CD8-positive, alpha-beta T cell (primary cell): ENCODE measurements at regions of chr2 and their contacts with region 1.

Region 1: GRCh38 chr2:208265801-208266552 is at the start of gene PIKFYVE:
- DNase-seq: peak; percentile 71 to 95 (median 88)
- ATAC-seq: peak; percentile 80
- H3K4me3 ChIP-seq: peak within 1 kb of the TSS; percentile 70 to 86
- H3K4me3 Mint-ChIP-seq: peak within 1 kb of the TSS; percentile 86
- H3K27ac ChIP-seq: peak within 1 kb of the TSS; percentile 67 to 88
- H3K27ac Mint-ChIP-seq: peak within 1 kb of the TSS; percentile 98
- H3K4me1 ChIP-seq: peaks cover 21% of the 10 kb centered on the region
- H3K4me1 Mint-ChIP-seq: peaks cover 45% of the 10 kb centered on the region
- H3K27me3 ChIP-seq: no peaks in the 10 kb centered on the region
- H3K27me3 Mint-ChIP-seq: no peaks in the 10 kb centered on the region
- CTCF ChIP-seq: no peak
- total RNA-seq, gene PIKFYVE: 27.7 to 29.1 TPM

Region 2: DNA sequence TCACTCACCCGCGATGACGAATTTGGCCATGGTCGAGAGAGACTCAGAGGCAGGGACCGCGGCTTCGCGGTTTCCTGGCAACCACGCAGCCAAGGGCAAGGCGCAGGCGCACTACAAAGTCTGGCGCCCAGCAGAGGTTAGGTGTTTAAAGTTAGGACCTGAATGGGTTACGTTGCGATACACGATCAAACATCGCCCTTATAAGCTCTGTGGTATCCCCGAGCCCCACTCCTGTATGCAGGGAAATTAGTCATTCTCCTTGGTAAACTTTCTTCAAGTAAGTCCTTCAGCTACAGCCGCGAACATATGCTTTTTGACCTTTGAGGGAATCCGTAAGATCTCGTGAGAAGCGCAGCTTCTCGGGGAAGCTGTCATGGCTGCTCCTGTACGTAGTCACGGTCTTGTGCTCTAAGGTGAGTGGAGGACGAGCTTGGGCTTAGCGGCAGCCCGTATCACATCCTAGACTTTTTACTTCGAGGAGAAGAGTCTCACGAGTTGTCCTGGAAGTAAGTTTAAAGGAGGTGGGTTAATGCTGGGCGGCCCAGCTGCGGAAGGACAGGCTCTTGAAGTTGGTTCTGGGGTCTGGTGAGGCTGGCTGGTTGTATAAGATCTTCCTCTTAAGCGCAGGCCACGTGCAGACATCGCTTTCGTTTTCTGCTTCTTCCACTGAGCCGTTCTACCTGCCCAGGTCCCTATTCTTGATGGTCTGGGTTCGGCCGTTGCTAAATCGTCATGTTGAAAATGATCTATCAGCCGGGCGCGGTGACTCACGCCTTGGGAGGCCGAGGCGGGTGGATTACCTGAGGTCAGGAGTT is 1500.5 kb before region 1 on chr2 and contains the starts of genes FASTKD2 and MDH1B:
- CTCF ChIA-PET with region 1: no interaction called
- POLR2A ChIA-PET with region 1: no interaction called
- intact Hi-C with region 1: loop called (anchors 1 to 5 kb)
- DNase-seq: peak; percentile 64 to 94 (median 81)
- ATAC-seq: peak; percentile 87
- H3K4me3 ChIP-seq: peak within 1 kb of the TSS; percentile 62 to 94
- H3K4me3 Mint-ChIP-seq: peak within 1 kb of the TSS; percentile 94
- H3K27ac ChIP-seq: peak within 1 kb of the TSS; percentile 93 to 97
- H3K27ac Mint-ChIP-seq: peak within 1 kb of the TSS; percentile 98
- H3K4me1 ChIP-seq: peaks cover 40% of the 10 kb centered on the region
- H3K4me1 Mint-ChIP-seq: peaks cover 41% of the 10 kb centered on the region
- H3K27me3 ChIP-seq: no peaks in the 10 kb centered on the region
- H3K27me3 Mint-ChIP-seq: no peaks in the 10 kb centered on the region
- CTCF ChIP-seq: no peak
- total RNA-seq, gene FASTKD2: 31.3 to 33.8 TPM
- total RNA-seq, gene MDH1B: 0.19 to 0.33 TPM

Region 3: GRCh38 chr2:208025037-208025813 is 240.8 kb before region 1 on chr2 and contains the start of gene PLEKHM3:
- CTCF ChIA-PET with region 1: no interaction called
- POLR2A ChIA-PET with region 1: interaction called, 3 read pairs
- intact Hi-C with region 1: loop called in 1 of 2 experiments (anchors 1 kb)
- DNase-seq: peak; percentile 53 to 90 (median 71)
- ATAC-seq: peak; percentile 76
- H3K4me3 ChIP-seq: peak within 1 kb of the TSS; percentile 79 to 80
- H3K4me3 Mint-ChIP-seq: peak within 1 kb of the TSS; percentile 98
- H3K27ac ChIP-seq: peak within 1 kb of the TSS; percentile 64 to 67
- H3K27ac Mint-ChIP-seq: peak within 1 kb of the TSS; percentile 95
- H3K4me1 ChIP-seq: peaks cover 6% of the 10 kb centered on the region
- H3K4me1 Mint-ChIP-seq: peaks cover 30% of the 10 kb centered on the region
- H3K27me3 ChIP-seq: no peaks in the 10 kb centered on the region
- H3K27me3 Mint-ChIP-seq: no peaks in the 10 kb centered on the region
- CTCF ChIP-seq: no peak
- total RNA-seq, gene PLEKHM3: 10.9 to 11.3 TPM

Region 4: GRCh38 chr2:208175069-208175839 is 90.7 kb before region 1 on chr2:
- CTCF ChIA-PET with region 1: interaction called, 7 read pairs
- POLR2A ChIA-PET with region 1: no interaction called
- intact Hi-C with region 1: loop called (anchors 2 to 5 kb)
- DNase-seq: peak; percentile 27 to 74 (median 57)
- ATAC-seq: peak; percentile 96
- H3K4me3 ChIP-seq: no peak overlapping the region
- H3K4me3 Mint-ChIP-seq: no peak overlapping the region
- H3K27ac ChIP-seq: no peak overlapping the region
- H3K27ac Mint-ChIP-seq: no peak overlapping the region
- H3K4me1 ChIP-seq: no peaks in the 10 kb centered on the region
- H3K4me1 Mint-ChIP-seq: peaks cover 4% of the 10 kb centered on the region
- H3K27me3 ChIP-seq: no peaks in the 10 kb centered on the region
- H3K27me3 Mint-ChIP-seq: peaks cover 12% of the 10 kb centered on the region
- CTCF ChIP-seq: peak; percentile 78

Region 5: DNA sequence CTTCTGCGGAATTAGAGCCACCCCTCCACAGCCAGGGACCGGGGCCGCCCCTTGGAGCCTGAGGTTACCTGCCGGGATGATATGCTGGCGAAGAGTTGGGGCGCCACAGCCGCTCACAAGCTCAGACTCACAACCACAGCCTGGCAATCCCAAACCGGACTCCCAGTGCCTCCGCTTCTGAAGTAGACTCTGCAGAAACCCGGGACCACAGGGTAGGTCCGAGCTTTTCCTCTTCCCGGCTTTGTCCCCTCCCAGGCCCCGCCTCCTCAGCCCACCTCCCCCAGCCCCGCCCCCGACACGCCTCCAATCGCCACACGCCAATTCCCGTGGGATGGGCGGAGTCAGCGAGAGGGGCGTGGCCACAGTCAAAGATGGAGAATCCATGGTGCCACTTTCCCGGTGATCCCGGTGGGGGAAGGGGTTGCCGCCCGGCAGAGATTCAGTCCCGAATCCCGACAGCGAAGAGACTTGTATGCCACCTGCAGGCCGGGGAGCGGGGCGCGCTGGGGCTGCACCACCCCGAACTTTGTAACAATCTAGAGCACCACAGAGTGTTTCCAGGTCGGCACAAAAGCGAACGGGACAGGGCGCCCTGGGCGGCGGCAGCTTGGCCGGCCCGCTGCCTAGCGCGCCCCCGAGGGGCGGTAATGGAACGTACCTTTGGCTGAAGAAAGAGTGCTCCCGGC is 11.0 kb before region 1 on chr2 and contains the start of gene IDH1:
- CTCF ChIA-PET with region 1: interaction called, 90 read pairs
- POLR2A ChIA-PET with region 1: interaction called, 50 read pairs
- intact Hi-C with region 1: loop called (anchors 1 kb)
- DNase-seq: peak; percentile 83 to 97 (median 93)
- ATAC-seq: peak; percentile 85
- H3K4me3 ChIP-seq: peak within 1 kb of the TSS; percentile 99
- H3K4me3 Mint-ChIP-seq: peak within 1 kb of the TSS; percentile 94
- H3K27ac ChIP-seq: peak within 1 kb of the TSS; percentile 31 to 51
- H3K27ac Mint-ChIP-seq: peak within 1 kb of the TSS; percentile 83
- H3K4me1 ChIP-seq: peaks cover 13% of the 10 kb centered on the region
- H3K4me1 Mint-ChIP-seq: peaks cover 31% of the 10 kb centered on the region
- H3K27me3 ChIP-seq: no peaks in the 10 kb centered on the region
- H3K27me3 Mint-ChIP-seq: no peaks in the 10 kb centered on the region
- CTCF ChIP-seq: no peak
- total RNA-seq, gene IDH1: 3.0 to 4.0 TPM

Region 6: GRCh38 chr2:208304157-208304556 is 38.2 kb after region 1 on chr2:
- CTCF ChIA-PET with region 1: no interaction called
- POLR2A ChIA-PET with region 1: no interaction called
- intact Hi-C with region 1: no loop called
- DNase-seq: no peak
- ATAC-seq: no peak
- H3K4me3 ChIP-seq: no peak overlapping the region
- H3K4me3 Mint-ChIP-seq: no peak overlapping the region
- H3K27ac ChIP-seq: no peak overlapping the region
- H3K27ac Mint-ChIP-seq: no peak overlapping the region
- H3K4me1 ChIP-seq: no peaks in the 10 kb centered on the region
- H3K4me1 Mint-ChIP-seq: no peaks in the 10 kb centered on the region
- H3K27me3 ChIP-seq: no peaks in the 10 kb centered on the region
- H3K27me3 Mint-ChIP-seq: no peaks in the 10 kb centered on the region
- CTCF ChIP-seq: no peak

Region 7: GRCh38 chr2:209942936-209943605 is 1677.1 kb after region 1 on chr2:
- CTCF ChIA-PET with region 1: no interaction called
- POLR2A ChIA-PET with region 1: no interaction called
- intact Hi-C with region 1: no loop called
- DNase-seq: no peak
- ATAC-seq: no peak
- H3K4me3 ChIP-seq: no peak overlapping the region
- H3K4me3 Mint-ChIP-seq: no peak overlapping the region
- H3K27ac ChIP-seq: no peak overlapping the region
- H3K27ac Mint-ChIP-seq: no peak overlapping the region
- H3K4me1 ChIP-seq: no peaks in the 10 kb centered on the region
- H3K4me1 Mint-ChIP-seq: no peaks in the 10 kb centered on the region
- H3K27me3 ChIP-seq: peaks cover 0 to 2% of the 10 kb centered on the region in 2 experiments
- H3K27me3 Mint-ChIP-seq: peaks cover 6% of the 10 kb centered on the region
- CTCF ChIP-seq: no peak

Region 8: DNA sequence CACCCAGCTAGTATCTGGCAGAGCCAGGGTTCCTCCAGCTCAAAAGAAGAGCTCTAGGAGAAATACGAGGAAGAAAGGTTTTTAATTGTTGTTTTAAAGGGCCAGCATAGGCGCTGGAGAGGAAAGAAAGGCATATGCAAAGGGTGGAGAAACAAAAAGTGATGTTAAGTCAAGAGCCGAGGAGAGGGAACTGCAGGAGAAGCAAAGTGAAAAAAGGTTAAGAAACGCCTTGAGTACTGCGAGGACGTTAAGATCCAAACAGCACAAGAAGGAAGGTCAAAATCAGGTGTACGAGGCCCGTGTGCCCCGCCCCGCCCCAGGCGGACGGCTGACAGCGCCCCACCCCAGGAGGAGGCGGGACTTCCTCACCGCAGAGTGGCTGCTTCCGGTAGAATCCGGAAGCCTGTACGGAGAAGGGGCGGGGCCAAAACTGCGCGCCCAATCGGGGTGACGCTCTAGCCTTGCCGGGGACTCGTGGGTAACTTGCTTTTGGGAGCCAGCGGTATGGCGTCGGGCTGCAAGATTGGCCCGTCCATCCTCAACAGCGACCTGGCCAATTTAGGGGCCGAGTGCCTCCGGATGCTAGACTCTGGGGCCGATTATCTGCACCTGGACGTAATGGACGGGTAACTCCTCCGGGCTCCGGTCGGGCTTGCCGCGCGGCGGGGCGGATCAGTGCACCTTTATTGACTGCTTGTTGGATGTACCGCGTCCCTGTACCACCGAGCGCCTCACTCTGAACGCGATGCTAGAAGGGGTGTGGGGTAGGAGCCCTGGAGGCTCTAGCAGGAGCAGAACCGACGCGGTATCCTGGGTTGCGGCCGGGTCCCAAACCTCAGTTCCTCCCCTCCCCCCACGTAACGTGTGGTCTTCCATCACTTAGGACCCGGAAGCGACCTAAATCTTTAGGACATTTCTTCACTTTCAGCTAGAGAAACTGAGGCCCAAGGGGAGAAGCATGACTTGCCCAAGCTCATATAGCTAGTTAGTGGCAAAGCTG is 1736.5 kb after region 1 on chr2 and contains the start of gene RPE:
- CTCF ChIA-PET with region 1: no interaction called
- POLR2A ChIA-PET with region 1: no interaction called
- intact Hi-C with region 1: loop called (anchors 5 kb)
- DNase-seq: peak; percentile 95 to 99 (median 98)
- ATAC-seq: peak; percentile 98
- H3K4me3 ChIP-seq: peak within 1 kb of the TSS; percentile 76 to 94
- H3K4me3 Mint-ChIP-seq: peak within 1 kb of the TSS; percentile 92
- H3K27ac ChIP-seq: peak within 1 kb of the TSS; percentile 60 to 84
- H3K27ac Mint-ChIP-seq: peak within 1 kb of the TSS; percentile 96
- H3K4me1 ChIP-seq: peaks cover 47% of the 10 kb centered on the region
- H3K4me1 Mint-ChIP-seq: peaks cover 64% of the 10 kb centered on the region
- H3K27me3 ChIP-seq: no peaks in the 10 kb centered on the region
- H3K27me3 Mint-ChIP-seq: no peaks in the 10 kb centered on the region
- CTCF ChIP-seq: no peak
- total RNA-seq, gene RPE: 7.2 to 10.5 TPM

Region 9: DNA sequence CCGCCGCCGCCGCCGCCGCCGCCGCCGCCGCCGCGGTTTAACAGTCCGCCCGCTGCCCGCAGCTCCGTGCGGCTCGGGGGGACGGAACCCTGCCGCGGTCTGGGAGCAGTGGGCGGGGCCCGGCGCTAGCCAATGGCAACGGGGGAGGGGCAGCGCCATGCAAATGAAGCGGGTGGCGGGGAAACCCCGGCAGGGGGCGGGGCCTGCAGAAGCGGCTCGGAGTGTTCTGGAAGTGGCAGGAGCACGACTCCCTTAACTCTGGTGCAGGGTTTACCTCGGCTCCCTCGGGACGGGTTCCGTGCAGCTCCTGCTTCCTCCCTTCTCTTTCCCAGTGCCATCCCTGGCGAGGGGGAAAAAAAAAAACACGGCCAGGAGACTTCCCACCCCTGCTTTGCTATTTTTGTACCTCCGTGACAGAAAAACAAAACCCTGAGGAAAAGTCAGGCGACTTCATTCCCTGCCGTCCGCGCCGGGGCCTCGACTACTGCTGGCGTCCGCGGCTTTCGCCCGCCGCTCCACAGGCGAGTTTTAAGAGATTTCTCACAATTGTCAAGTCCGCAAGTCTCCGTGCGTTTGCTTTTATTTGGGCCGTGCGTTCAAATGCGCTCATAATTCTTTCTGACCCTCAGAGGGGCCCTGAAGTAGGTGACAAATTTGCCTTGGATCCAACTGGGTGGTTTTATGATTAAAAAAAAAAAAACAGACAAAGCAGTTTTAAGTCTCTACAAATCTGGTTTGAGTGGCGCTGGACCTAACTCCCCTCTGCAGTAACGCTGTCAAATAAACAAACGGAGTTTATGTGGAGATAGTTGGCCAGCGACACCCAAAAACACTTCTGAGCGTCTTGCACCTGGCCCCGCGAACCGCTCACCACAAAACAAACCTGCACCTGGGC is 1905.6 kb after region 1 on chr2 and contains the start of gene KANSL1L:
- CTCF ChIA-PET with region 1: no interaction called
- POLR2A ChIA-PET with region 1: no interaction called
- intact Hi-C with region 1: loop called in 1 of 2 experiments (anchors 5 kb)
- DNase-seq: peak; percentile 93 to 99 (median 97)
- ATAC-seq: peak; percentile 88
- H3K4me3 ChIP-seq: peak within 1 kb of the TSS; percentile 85 to 88
- H3K4me3 Mint-ChIP-seq: peak within 1 kb of the TSS; percentile 99
- H3K27ac ChIP-seq: peak within 1 kb of the TSS; percentile 80 to 91
- H3K27ac Mint-ChIP-seq: peak within 1 kb of the TSS; percentile 97
- H3K4me1 ChIP-seq: peaks cover 10% of the 10 kb centered on the region
- H3K4me1 Mint-ChIP-seq: peaks cover 31% of the 10 kb centered on the region
- H3K27me3 ChIP-seq: no peaks in the 10 kb centered on the region
- H3K27me3 Mint-ChIP-seq: no peaks in the 10 kb centered on the region
- CTCF ChIP-seq: no peak
- total RNA-seq, gene KANSL1L: 4.2 to 4.7 TPM